BJ (cell line): ENCODE measurements at regions of chr1 and their contacts with region 1.

Region 1: GRCh38 chr1:24463776-24464735 is 38.6 kb upstream of the RCAN3 start:
- DNase-seq: peak; percentile 63
- H3K4me3 ChIP-seq: no peak overlapping the region
- H3K27me3 ChIP-seq: no peaks in the 10 kb centered on the region
- CTCF ChIP-seq: no peak

Region 2: GRCh38 chr1:24364975-24365678 is 98.9 kb before region 1 on chr1:
- CTCF ChIA-PET with region 1: no interaction called
- POLR2A ChIA-PET with region 1: no interaction called
- DNase-seq: peak; percentile 61
- H3K4me3 ChIP-seq: no peak overlapping the region
- H3K27me3 ChIP-seq: no peaks in the 10 kb centered on the region; the same call in 1 of the 2 replicates
- CTCF ChIP-seq: no peak

Region 3: GRCh38 chr1:24452922-24453485 is 11.1 kb before region 1 on chr1:
- CTCF ChIA-PET with region 1: interaction called, 10 read pairs
- POLR2A ChIA-PET with region 1: no interaction called
- DNase-seq: no peak
- H3K4me3 ChIP-seq: no peak overlapping the region
- H3K27me3 ChIP-seq: no peaks in the 10 kb centered on the region
- CTCF ChIP-seq: no peak